Activated naive CD4-positive, alpha-beta T cell treated with anti-CD3 and anti-CD28 coated beads, Interleukin-2, amount 10 ng/mL, durations not matched to agents 7 days and 5 days (primary cell): ENCODE measurements at regions of chr20 and their contacts with region 1.

Region 1: GRCh38 chr20:25399037-25399430 is 8.4 kb upstream of the ABHD12 start:
- DNase-seq: peak; percentile 37
- H3K4me3 Mint-ChIP-seq: no peak overlapping the region
- H3K27ac Mint-ChIP-seq: no peak overlapping the region
- H3K4me1 Mint-ChIP-seq: no peaks in the 10 kb centered on the region
- H3K27me3 Mint-ChIP-seq: peaks cover 25% of the 10 kb centered on the region

Region 2: DNA sequence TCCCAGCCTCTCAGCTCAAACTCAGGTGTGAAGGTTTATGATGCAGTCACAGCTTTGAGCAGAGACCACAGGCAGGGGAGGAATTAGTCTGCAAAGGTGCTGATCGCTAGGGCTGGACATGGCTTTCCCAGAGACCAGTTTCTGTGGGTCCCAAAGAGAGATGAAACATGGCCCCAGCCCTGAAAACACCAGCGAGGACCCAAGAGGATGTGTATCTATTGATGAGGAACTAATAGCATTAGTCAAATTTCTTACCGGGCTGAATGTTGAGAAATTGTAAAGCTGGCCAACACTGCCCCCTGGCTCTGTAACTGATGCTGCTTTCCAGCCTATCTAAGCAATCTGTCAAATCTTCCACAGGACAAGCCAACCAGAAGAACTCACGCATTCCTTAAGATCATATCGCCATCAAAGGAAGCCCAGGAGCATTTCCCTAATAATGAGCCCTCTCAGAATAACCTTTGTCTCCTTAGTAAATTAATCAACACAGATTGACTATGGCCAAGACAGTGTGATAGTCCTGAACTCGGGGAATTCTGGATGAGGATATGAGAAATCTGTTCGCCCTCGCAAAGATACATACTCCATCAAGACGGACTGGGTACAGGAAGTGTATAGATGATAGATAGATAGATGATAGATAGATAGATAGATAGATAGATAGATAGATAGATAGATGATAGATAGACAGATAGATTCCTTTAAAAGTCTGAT is 333.3 kb before region 1 on chr20:
- CTCF ChIA-PET with region 1: interaction called, 12 read pairs
- DNase-seq: peak; percentile 79
- H3K4me3 Mint-ChIP-seq: no peak overlapping the region
- H3K27ac Mint-ChIP-seq: no peak overlapping the region
- H3K4me1 Mint-ChIP-seq: peaks cover 3% of the 10 kb centered on the region
- H3K27me3 Mint-ChIP-seq: peaks cover 64% of the 10 kb centered on the region

Region 3: GRCh38 chr20:25294459-25295385 is 104.3 kb before region 1 on chr20:
- CTCF ChIA-PET with region 1: interaction called, 30 read pairs
- DNase-seq: peak; percentile 70
- H3K4me3 Mint-ChIP-seq: no peak overlapping the region
- H3K27ac Mint-ChIP-seq: no peak overlapping the region
- H3K4me1 Mint-ChIP-seq: peaks cover 4% of the 10 kb centered on the region
- H3K27me3 Mint-ChIP-seq: no peaks in the 10 kb centered on the region

Region 4: DNA sequence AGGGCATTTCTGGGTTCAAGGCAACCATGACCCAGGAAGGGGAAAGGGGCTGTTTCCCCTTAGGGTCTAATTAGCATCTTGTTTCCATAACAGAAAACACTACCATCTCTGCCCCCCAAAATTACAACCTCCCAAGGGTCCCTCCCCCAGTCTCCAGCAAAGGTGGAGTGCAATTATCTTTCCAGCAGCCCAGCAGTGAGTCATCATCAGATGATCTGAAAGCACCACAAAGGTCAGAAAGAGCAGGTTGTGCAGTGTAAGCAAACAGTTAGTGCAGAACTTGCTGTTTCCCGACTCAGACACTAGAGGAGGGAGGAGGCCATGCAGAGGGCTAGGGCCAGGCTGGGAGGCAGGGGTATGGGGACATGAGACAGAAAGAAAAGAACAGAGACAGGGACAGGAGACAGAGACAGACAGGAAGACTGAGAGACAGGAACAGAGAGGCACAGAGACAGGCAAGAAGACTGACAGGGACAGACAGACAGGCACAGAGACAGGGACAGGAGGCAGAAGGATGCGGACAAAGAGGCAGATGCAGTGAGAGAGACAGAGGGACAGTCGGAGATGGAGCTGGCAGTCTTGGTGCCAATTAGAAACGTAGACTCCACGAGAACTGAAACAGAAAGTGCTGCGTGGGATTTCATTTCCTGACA is 88.6 kb before region 1 on chr20:
- CTCF ChIA-PET with region 1: interaction called, 33 read pairs
- DNase-seq: peak; percentile 69
- H3K4me3 Mint-ChIP-seq: peak overlapping the region; percentile 60
- H3K27ac Mint-ChIP-seq: peak overlapping the region; percentile 88
- H3K4me1 Mint-ChIP-seq: peaks cover 37% of the 10 kb centered on the region
- H3K27me3 Mint-ChIP-seq: no peaks in the 10 kb centered on the region

Region 5: GRCh38 chr20:25360635-25361286 is 38.3 kb before region 1 on chr20:
- CTCF ChIA-PET with region 1: no interaction called
- DNase-seq: no peak
- H3K4me3 Mint-ChIP-seq: no peak overlapping the region
- H3K27ac Mint-ChIP-seq: no peak overlapping the region
- H3K4me1 Mint-ChIP-seq: peaks cover 5% of the 10 kb centered on the region
- H3K27me3 Mint-ChIP-seq: no peaks in the 10 kb centered on the region

Region 6: DNA sequence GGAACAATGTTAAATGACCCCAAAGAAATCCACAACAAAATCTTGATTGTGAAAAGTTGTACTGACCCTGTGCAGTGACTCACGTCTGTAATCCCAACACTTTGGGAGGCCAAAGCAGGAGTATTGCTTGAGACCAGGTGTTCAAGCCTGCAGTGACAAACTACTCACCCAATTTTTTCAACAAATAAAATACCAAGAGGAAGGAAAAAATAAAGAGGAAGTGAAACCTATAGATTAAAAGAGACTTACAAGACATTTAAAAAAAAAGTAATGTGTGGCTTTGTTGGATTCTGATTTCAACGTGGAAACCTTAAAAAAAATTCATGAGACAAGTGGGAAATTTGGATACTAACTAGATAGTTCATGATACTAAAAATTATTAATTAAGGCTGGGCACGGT is 40.3 kb after region 1 on chr20:
- CTCF ChIA-PET with region 1: no interaction called
- DNase-seq: no peak
- H3K4me3 Mint-ChIP-seq: no peak overlapping the region
- H3K27ac Mint-ChIP-seq: no peak overlapping the region
- H3K4me1 Mint-ChIP-seq: peaks cover 6% of the 10 kb centered on the region
- H3K27me3 Mint-ChIP-seq: no peaks in the 10 kb centered on the region

Region 7: DNA sequence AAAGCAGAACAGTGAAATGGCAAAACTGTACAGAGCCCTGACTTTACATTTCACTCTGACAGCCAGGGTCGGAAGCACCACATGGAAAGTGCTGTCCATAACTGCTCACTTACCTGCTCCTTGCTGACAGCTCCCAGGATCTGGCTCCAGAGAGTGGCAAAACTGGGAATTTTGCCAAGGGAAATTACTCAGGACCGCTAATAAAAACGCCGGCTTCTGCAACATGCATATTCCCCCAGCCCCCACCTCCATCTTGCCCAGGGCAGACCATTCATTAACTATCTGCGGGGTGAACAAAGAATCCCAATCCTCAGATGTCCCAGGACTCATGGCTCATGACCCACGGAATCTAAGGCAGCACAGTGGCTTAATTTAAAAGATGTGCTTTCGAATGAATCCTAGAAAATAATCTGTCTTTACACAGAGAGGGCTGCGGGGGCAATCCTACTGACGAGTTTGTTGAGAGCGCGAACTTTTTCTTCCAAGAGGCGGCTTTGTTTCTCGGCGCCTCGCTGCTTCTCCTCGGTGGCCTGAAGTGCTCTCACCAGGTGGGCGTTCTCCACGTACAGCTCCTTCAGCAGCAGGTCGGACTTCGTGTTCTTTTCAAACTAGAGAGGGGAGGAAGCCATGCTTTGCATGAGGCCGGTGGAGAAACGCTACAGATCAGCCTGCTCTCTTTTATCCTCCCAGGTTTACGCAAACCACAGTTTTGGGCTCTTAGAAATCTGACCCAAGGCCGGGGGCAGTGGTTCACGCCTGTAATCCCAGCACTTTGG is 54.2 kb after region 1 on chr20:
- CTCF ChIA-PET with region 1: no interaction called
- DNase-seq: no peak
- H3K4me3 Mint-ChIP-seq: no peak overlapping the region
- H3K27ac Mint-ChIP-seq: no peak overlapping the region
- H3K4me1 Mint-ChIP-seq: no peaks in the 10 kb centered on the region
- H3K27me3 Mint-ChIP-seq: no peaks in the 10 kb centered on the region